ENCODE measurements at regions of chr2 and their contacts with region 1.

Region 1: GRCh38 chr2:240513549-240514287 is 44.1 kb downstream of the ANKMY1 start:
- DNase-seq: peak; percentile 68 to 93
- H3K4me3 ChIP-seq: no peak overlapping the region
- CTCF ChIP-seq: peak in 1 of 3 donors; percentile 67
- POLR2A ChIP-seq: no peak

Region 2: GRCh38 chr2:240832205-240832727 is 318.5 kb after region 1 on chr2:
- intact Hi-C with region 1: loop called (anchors 10 kb)
- DNase-seq: peak; percentile 62 to 96
- H3K4me3 ChIP-seq: no peak overlapping the region
- CTCF ChIP-seq: no peak
- POLR2A ChIP-seq: no peak